ENCODE measurements at regions of chr2 and their contacts with region 1.

Region 1: GRCh38 chr2:290090-290722 is 2.3 kb upstream of the ALKAL2 start:
- DNase-seq: peak; percentile 86
- H3K4me3 ChIP-seq: peak overlapping the region; percentile 33 to 70 (median 48)
- H3K27ac ChIP-seq: peak overlapping the region in 6 of 8 donors; percentile 27 to 66 (median 42)
- H3K4me1 ChIP-seq: peaks cover 13 to 43% (median 33%) of the 10 kb centered on the region in 6 donors
- H3K27me3 ChIP-seq: peaks cover 0 to 62% (median 36%) of the 10 kb centered on the region in 7 donors
- CTCF ChIP-seq: peak; percentile 24 to 82 (median 70)
- POLR2A ChIP-seq: no peak

Region 2: GRCh38 chr2:169741-170140 is 120.5 kb before region 1 on chr2:
- intact Hi-C with region 1: loop called (anchors 5 kb)
- DNase-seq: no peak
- H3K4me3 ChIP-seq: no peak overlapping the region
- H3K27ac ChIP-seq: no peak overlapping the region
- H3K4me1 ChIP-seq: peaks cover 0 to 2% (median 0%) of the 10 kb centered on the region in 6 donors
- H3K27me3 ChIP-seq: peaks cover 0 to 11% (median 0%) of the 10 kb centered on the region in 7 donors
- CTCF ChIP-seq: no peak
- POLR2A ChIP-seq: no peak